Uterus (tissue), 4 donors: ENCODE measurements at regions of chr19 and their contacts with region 1.

Region 1: DNA sequence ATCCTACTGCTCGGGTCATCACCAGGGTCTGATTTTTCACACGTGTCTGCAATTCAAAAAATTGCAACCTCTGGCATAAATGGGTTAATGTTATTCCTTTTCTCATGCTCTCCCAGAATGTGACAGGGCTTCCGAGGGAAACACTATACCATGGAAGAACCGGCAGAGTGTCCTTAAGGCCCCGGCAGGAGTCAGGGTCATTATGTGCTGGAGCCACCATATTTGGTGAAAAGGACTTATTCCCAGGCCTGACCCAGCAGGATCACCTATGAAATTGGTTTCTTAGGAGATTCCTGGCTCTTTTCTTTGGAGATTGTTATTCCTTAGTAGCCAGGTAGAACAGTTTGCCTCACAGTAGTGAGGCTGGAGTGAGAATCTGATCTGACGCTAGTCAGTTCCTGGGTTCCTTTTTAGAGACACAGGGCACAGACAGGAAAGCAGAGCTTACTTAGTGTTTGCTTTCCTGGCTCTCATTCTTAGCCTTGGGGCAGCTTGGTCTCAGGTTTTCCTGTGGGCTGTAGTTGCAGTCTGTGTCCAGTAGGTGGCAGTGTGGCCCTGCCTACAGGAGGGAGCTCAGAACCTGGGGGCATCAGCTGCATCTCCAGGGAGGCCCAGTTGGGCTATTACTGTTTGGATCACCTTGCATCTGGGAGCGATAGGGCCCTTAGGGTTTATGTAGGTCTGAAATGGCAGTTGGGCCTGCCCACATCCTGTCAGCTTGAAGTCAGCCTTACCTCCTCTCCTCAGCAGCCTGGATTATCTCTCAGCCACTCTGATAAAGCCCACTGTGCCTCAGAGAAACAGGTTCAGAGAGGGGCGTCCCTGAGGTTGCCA is 12.4 kb downstream of the SNRNP70 start:
- DNase-seq: peak; percentile 69 to 71
- H3K4me3 ChIP-seq: no peak overlapping the region
- H3K27ac ChIP-seq: no peak overlapping the region
- H3K4me1 ChIP-seq: no peaks in the 10 kb centered on the region
- H3K27me3 ChIP-seq: no peaks in the 10 kb centered on the region
- CTCF ChIP-seq: peak; percentile 92 to 99 (median 96)
- POLR2A ChIP-seq: no peak

Region 2: GRCh38 chr19:49056010-49056901 is 41.4 kb before region 1 on chr19:
- intact Hi-C with region 1: no loop called
- DNase-seq: peak; percentile 28 to 56
- H3K4me3 ChIP-seq: peak overlapping the region; percentile 31 to 32
- H3K27ac ChIP-seq: no peak overlapping the region
- H3K4me1 ChIP-seq: peaks cover 0 to 5% of the 10 kb centered on the region in 2 donors
- H3K27me3 ChIP-seq: no peaks in the 10 kb centered on the region
- CTCF ChIP-seq: peak in 3 of 4 experiments; percentile 23 to 42 (median 40)
- POLR2A ChIP-seq: no peak

Region 3: GRCh38 chr19:49113762-49114629 is 16.3 kb after region 1 on chr19 and contains the start of gene LIN7B:
- intact Hi-C with region 1: no loop called
- DNase-seq: peak; percentile 40 to 70
- H3K4me3 ChIP-seq: peak within 1 kb of the TSS; percentile 62 to 64
- H3K27ac ChIP-seq: peak within 1 kb of the TSS; percentile 70 to 75
- H3K4me1 ChIP-seq: peaks cover 0 to 5% of the 10 kb centered on the region in 2 donors
- H3K27me3 ChIP-seq: no peaks in the 10 kb centered on the region
- CTCF ChIP-seq: peak in 3 of 4 experiments; percentile 67 to 79 (median 69)
- POLR2A ChIP-seq: peak in 1 of 2 donors; percentile 55
- total RNA-seq, gene LIN7B: 5.1 to 15.2 (median 5.7) TPM in 3 of 4 donors, not detected in the other

Region 4: GRCh38 chr19:49148784-49149651 is 51.3 kb after region 1 on chr19:
- intact Hi-C with region 1: loop called (anchors 10 kb)
- DNase-seq: peak; percentile 95 to 98
- H3K4me3 ChIP-seq: peak overlapping the region; percentile 58 to 68
- H3K27ac ChIP-seq: peak overlapping the region; percentile 67 to 86
- H3K4me1 ChIP-seq: peaks cover 0 to 11% of the 10 kb centered on the region in 2 donors
- H3K27me3 ChIP-seq: no peaks in the 10 kb centered on the region
- CTCF ChIP-seq: peak in 1 of 4 experiments; percentile 3
- POLR2A ChIP-seq: peak; percentile 69 to 77

Region 5: DNA sequence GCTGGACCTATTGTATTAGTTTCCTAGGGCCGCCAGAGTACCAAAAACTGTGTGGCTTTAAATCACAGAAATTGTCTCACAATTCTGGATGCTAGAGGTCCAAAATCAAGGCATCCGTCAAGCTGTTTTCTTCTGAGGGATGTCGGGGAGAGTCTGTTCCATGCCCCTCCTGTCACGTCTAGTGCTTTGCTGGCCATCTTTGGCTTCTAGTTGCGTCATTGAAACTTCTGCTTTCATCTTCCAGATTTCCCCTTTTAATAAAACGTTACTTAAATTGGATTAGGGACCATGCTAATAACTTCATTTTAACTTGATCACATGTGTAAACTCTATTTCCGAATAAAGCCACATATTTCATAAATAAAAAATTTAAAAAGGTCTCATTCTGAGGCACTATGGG is 107.4 kb after region 1 on chr19:
- intact Hi-C with region 1: loop called (anchors 5 kb)
- DNase-seq: no peak
- H3K4me3 ChIP-seq: no peak overlapping the region
- H3K27ac ChIP-seq: no peak overlapping the region
- H3K4me1 ChIP-seq: no peaks in the 10 kb centered on the region
- H3K27me3 ChIP-seq: no peaks in the 10 kb centered on the region
- CTCF ChIP-seq: no peak
- POLR2A ChIP-seq: no peak